WTC11 (cell line): ENCODE measurements at regions of chr1 and their contacts with region 1.

Region 1: DNA sequence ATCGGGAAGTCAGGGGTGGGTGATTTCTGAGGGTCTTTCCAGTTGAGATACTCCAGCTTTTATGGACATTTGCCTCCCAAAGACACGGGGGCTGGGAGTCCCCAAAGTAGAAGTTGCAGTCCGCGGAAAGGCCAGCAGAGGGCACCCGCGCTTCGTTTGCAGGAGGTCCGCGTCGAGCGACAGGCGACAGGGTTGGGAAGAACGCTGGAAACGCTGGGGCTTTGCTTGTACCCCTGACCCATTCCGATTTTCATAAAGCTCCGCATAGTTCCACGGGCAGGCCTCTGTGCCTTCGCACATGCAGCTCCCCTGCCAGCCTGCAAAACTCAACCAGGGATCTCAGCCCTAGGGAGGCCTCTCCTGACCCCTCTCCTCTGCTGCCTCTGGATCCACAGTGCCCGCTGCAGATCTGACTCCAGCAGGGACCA is 44.2 kb upstream of the LAPTM5 start:
- DNase-seq: peak; percentile 97
- ATAC-seq: peak; percentile 62
- H3K4me3 Mint-ChIP-seq: peak overlapping the region; percentile 54
- H3K27ac Mint-ChIP-seq: no peak overlapping the region; the same call in 1 of the 2 replicates
- H3K4me1 Mint-ChIP-seq: peaks cover 34% of the 10 kb centered on the region
- H3K27me3 Mint-ChIP-seq: peaks cover 7% of the 10 kb centered on the region
- CTCF ChIP-seq: peak; percentile 92

Region 2: DNA sequence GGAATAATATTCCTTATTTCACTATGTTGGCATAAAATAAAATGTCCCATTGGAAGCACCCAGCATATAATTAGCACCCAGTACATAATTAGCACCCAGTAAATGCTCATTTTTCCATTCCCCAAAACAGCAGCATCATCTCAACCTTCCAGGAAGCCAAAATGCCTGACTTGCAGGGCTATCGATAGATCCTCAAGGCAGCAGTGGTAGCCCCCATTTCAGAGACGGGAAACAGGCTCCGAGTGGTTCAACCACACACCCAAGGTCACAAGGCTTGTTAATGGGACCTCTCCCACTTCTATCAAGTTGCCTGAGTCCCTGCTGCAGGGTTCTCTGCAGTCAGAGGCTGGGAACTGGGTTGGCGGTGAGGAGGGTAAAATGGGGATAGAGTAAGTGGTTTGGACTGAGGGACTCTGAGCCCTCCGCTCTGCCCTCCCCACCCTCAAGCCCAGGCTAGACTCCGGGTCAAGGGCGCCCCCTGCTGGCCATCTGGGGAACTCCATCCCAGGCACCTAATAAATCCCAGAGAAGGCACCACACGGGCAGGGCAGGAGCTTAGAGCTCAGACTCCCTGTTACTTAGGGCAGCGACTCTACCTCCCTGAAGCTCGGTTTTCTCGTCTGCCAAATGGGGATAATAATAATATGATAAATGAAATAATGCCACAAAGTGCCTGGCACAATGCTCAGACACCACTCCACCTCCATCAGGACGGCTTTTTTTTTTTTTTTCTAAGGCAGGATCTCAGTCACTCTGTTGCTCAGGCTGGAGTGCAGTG is 22.3 kb before region 1 on chr1:
- CTCF ChIA-PET with region 1: interaction called, 60 read pairs
- POLR2A ChIA-PET with region 1: no interaction called
- DNase-seq: peak; percentile 97
- ATAC-seq: peak; percentile 82
- H3K4me3 Mint-ChIP-seq: no peak overlapping the region
- H3K27ac Mint-ChIP-seq: no peak overlapping the region
- H3K4me1 Mint-ChIP-seq: peaks cover 10% of the 10 kb centered on the region
- H3K27me3 Mint-ChIP-seq: peaks cover 7% of the 10 kb centered on the region; the same call in 1 of the 2 replicates
- CTCF ChIP-seq: peak; percentile 100

Region 3: DNA sequence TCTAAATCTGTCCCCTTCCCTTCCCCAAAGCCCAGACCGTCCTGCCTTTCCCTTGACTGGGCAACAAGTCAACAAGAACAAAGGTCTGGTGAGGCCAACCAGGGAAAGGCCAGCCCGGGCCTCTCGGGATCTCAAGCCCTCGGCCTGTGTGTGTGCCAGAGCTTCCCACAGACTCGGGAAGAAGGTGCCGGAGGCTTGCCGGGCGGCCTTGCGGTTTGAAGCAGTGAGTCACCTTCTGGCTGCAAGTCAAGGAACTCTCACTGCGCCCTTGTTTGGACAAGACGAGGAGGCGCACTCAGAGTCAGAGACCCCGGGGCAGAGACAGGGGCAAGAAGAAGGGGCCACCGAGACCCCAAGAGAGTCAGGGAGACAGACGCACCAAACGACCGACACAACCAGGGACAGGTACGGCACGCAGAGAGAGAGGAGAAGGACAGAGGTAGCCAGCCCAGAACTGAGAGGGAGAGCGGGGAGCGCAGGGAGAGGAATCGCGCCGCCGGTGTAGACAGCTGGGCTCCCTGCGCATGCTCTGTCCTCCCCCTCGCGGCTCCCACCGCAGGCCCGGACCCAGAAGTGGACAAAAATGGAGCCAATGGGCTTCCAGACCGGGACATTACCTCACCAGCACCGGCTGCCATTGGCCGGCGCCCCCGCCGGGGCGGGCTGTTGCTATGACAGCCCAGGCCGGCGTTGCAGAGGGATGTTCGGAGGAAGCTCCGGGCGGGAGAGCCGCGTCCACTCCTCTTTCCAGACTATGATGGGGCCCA is 22.4 kb after region 1 on chr1:
- CTCF ChIA-PET with region 1: interaction called, 82 read pairs
- POLR2A ChIA-PET with region 1: interaction called, 3 read pairs
- DNase-seq: peak; percentile 96
- ATAC-seq: peak; percentile 98
- H3K4me3 Mint-ChIP-seq: peak overlapping the region; percentile 85
- H3K27ac Mint-ChIP-seq: peak overlapping the region; percentile 14; the same call in 1 of the 2 replicates
- H3K4me1 Mint-ChIP-seq: peaks cover 11% of the 10 kb centered on the region
- H3K27me3 Mint-ChIP-seq: peaks cover 33% of the 10 kb centered on the region
- CTCF ChIP-seq: no peak

Region 4: GRCh38 chr1:30877205-30877912 is 75.6 kb after region 1 on chr1:
- CTCF ChIA-PET with region 1: interaction called, 19 read pairs
- POLR2A ChIA-PET with region 1: no interaction called
- DNase-seq: no peak
- ATAC-seq: peak; percentile 43
- H3K4me3 Mint-ChIP-seq: no peak overlapping the region
- H3K27ac Mint-ChIP-seq: peak overlapping the region; percentile 79; the same call in 1 of the 2 replicates
- H3K4me1 Mint-ChIP-seq: peaks cover 34% of the 10 kb centered on the region
- H3K27me3 Mint-ChIP-seq: no peaks in the 10 kb centered on the region
- CTCF ChIP-seq: no peak

Region 5: DNA sequence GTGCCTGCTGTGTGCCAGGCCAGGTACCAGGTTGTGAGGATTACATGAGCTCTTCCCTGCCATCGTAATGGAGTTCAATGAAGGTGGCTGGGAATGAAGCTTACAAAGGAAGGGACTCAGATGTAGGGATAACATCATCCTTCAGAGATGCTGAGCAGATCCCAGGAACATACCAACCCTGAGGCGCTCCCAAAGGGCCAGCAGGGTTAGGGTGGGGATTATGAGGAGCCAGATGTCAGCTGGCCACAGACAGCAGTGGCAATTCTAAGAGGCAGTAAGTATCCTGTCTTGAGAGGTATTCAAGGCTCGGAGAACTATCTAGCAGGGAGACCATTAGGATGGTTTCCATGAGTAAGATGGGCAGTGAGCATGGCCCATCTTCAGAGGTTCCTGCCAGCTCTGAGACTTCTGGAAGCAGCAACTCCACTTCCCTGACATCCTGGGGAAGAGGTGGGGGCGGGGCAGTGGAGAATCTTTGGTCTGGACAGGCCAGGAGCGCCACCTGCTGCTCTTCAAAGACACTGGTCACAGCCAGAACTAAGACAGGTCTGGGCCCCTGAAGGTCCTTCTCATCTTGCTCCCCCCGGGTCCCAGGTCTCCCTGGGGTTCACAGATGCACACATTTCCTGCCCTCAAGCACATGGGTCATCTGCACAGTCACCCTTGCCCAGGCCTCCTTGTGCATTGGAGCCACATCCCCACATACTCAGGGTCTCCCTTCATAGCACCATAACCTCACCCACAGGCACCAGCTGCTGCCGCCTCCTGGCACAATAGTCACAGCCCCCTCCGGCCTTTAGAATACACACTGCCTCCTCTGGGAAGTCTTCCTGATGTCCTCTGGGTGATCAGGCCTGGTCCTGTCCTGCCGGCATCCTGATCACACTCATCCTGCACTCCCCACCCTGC is 109.5 kb after region 1 on chr1:
- CTCF ChIA-PET with region 1: interaction called, 606 read pairs
- POLR2A ChIA-PET with region 1: interaction called, 4 read pairs
- DNase-seq: peak; percentile 87
- ATAC-seq: peak; percentile 71
- H3K4me3 Mint-ChIP-seq: no peak overlapping the region
- H3K27ac Mint-ChIP-seq: no peak overlapping the region
- H3K4me1 Mint-ChIP-seq: peaks cover 33% of the 10 kb centered on the region
- H3K27me3 Mint-ChIP-seq: peaks cover 17% of the 10 kb centered on the region
- CTCF ChIP-seq: peak; percentile 59; the same call in 1 of the 2 replicates

Region 6: GRCh38 chr1:31038360-31038759 is 236.6 kb after region 1 on chr1:
- CTCF ChIA-PET with region 1: no interaction called
- POLR2A ChIA-PET with region 1: no interaction called
- DNase-seq: no peak
- ATAC-seq: no peak
- H3K4me3 Mint-ChIP-seq: no peak overlapping the region
- H3K27ac Mint-ChIP-seq: no peak overlapping the region
- H3K4me1 Mint-ChIP-seq: peaks cover 54% of the 10 kb centered on the region
- H3K27me3 Mint-ChIP-seq: no peaks in the 10 kb centered on the region
- CTCF ChIP-seq: no peak